ENCODE measurements at regions of chr3 and their contacts with region 1.

Region 1: GRCh38 chr3:129016356-129016719 is 15.2 kb downstream of the EFCC1 start:
- H3K4me3 ChIP-seq: no peak overlapping the region
- H3K27ac ChIP-seq: no peak overlapping the region
- H3K4me1 ChIP-seq: no peaks in the 10 kb centered on the region
- CTCF ChIP-seq: peak; percentile 10; the same call in 1 of the 2 replicates

Region 2: DNA sequence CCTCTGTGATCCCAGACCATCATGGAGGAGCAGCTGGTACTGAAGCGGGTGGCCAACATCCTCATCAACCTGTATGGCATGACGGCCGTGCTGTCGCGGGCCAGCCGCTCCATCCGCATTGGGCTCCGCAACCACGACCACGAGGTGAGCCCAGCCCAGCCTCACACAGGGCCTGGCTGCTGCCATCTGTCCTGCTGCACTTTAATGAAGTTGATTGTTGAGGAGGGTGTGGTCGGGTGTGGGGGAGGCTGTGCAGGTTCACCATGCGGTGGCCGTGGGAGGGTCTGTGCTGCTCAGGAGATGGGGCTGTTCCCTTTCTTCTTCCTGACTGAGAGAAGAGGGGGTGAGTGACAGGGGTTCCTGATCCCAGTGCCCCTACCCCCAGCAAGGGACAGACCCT is 106.3 kb before region 1 on chr3:
- CTCF ChIA-PET with region 1: no interaction called
- POLR2A ChIA-PET with region 1: no interaction called
- H3K4me3 ChIP-seq: no peak overlapping the region
- H3K27ac ChIP-seq: no peak overlapping the region
- H3K4me1 ChIP-seq: no peaks in the 10 kb centered on the region
- CTCF ChIP-seq: no peak

Region 3: GRCh38 chr3:129026728-129027543 is 10.6 kb after region 1 on chr3:
- CTCF ChIA-PET with region 1: interaction called, 22 read pairs
- POLR2A ChIA-PET with region 1: no interaction called
- H3K4me3 ChIP-seq: peak overlapping the region; percentile 49
- H3K27ac ChIP-seq: peak overlapping the region; percentile 1; the same call in 1 of the 2 replicates
- H3K4me1 ChIP-seq: no peaks in the 10 kb centered on the region
- CTCF ChIP-seq: 0 out of 2 replicates have a peak, but pooled peaks have one; percentile 31

Region 4: GRCh38 chr3:129039271-129040038 is 23.1 kb after region 1 on chr3:
- CTCF ChIA-PET with region 1: no interaction called
- POLR2A ChIA-PET with region 1: no interaction called
- H3K4me3 ChIP-seq: no peak overlapping the region
- H3K27ac ChIP-seq: no peak overlapping the region
- H3K4me1 ChIP-seq: no peaks in the 10 kb centered on the region
- CTCF ChIP-seq: no peak

Region 5: DNA sequence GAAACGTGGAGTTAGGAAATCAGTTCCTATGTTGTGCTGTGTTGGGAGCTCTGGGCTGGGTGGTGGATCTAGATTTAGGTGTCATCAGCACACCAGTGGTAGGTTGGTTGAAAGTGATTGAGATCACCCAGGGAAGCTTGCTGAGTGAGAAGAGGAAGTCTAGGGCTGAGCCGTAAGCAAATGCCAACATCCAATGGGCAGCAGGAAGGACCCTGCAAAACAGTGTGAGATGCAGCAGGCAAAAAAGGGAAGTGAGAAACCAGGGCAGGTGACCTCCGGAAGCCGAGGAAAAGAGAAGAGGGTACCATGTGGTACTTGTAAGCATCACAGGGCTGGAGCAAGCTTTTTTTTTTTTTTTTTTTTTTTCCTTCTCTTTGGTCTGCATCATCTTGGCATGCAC is 217.2 kb after region 1 on chr3:
- CTCF ChIA-PET with region 1: no interaction called
- POLR2A ChIA-PET with region 1: no interaction called
- H3K4me3 ChIP-seq: no peak overlapping the region
- H3K27ac ChIP-seq: no peak overlapping the region
- H3K4me1 ChIP-seq: no peaks in the 10 kb centered on the region
- CTCF ChIP-seq: no peak